Activated B cell treated with CpG ODN at 0.5 μM for 24 hours (primary cell): ENCODE measurements at regions of chr4 and their contacts with region 1.

Region 1: GRCh38 chr4:13654158-13654797 is 26.8 kb upstream of the BOD1L1 start:
- DNase-seq: peak; percentile 71
- ATAC-seq: peak; percentile 93
- H3K4me3 Mint-ChIP-seq: peak overlapping the region; percentile 85
- H3K27ac Mint-ChIP-seq: no peak overlapping the region
- H3K4me1 Mint-ChIP-seq: peaks cover 13% of the 10 kb centered on the region
- H3K27me3 Mint-ChIP-seq: peaks cover 6% of the 10 kb centered on the region
- CTCF ChIP-seq: peak; percentile 43

Region 2: DNA sequence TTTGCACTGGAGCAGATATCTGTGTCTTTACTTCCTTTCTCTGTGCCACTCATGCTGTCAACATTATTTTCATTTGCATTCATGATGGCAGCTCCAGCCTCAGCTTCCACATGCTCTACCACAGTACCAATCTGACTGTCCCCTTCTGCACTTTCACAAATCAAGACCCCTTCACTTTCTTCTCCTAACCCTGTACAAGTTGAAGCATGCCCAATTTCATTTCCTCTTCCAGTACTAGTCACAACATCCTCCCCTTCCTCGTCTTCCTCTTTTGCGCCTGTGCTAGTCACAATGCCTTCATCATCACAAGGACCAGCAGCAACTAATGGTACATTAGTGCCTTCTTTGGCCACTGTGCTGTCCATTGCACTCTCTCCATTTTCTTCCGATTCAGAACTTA is 53.2 kb before region 1 on chr4:
- CTCF ChIA-PET with region 1: interaction called, 4 read pairs
- POLR2A ChIA-PET with region 1: no interaction called
- intact Hi-C with region 1: loop called (anchors 2 kb)
- DNase-seq: no peak
- ATAC-seq: peak; percentile 96
- H3K4me3 Mint-ChIP-seq: peak overlapping the region; percentile 48
- H3K27ac Mint-ChIP-seq: peak overlapping the region; percentile 76
- H3K4me1 Mint-ChIP-seq: peaks cover 34% of the 10 kb centered on the region
- H3K27me3 Mint-ChIP-seq: no peaks in the 10 kb centered on the region
- CTCF ChIP-seq: no peak

Region 3: GRCh38 chr4:13918110-13918509 is 263.8 kb after region 1 on chr4:
- CTCF ChIA-PET with region 1: no interaction called
- POLR2A ChIA-PET with region 1: no interaction called
- intact Hi-C with region 1: no loop called
- DNase-seq: no peak
- ATAC-seq: no peak
- H3K4me3 Mint-ChIP-seq: no peak overlapping the region
- H3K27ac Mint-ChIP-seq: no peak overlapping the region
- H3K4me1 Mint-ChIP-seq: no peaks in the 10 kb centered on the region
- H3K27me3 Mint-ChIP-seq: peaks cover 4% of the 10 kb centered on the region
- CTCF ChIP-seq: no peak

Region 4: GRCh38 chr4:14125375-14126129 is 471.3 kb after region 1 on chr4:
- CTCF ChIA-PET with region 1: no interaction called
- POLR2A ChIA-PET with region 1: no interaction called
- intact Hi-C with region 1: loop called (anchors 10 kb)
- DNase-seq: no peak
- ATAC-seq: peak; percentile 90
- H3K4me3 Mint-ChIP-seq: peak overlapping the region; percentile 59
- H3K27ac Mint-ChIP-seq: peak overlapping the region; percentile 84
- H3K4me1 Mint-ChIP-seq: peaks cover 27% of the 10 kb centered on the region
- H3K27me3 Mint-ChIP-seq: no peaks in the 10 kb centered on the region
- CTCF ChIP-seq: no peak

Region 5: DNA sequence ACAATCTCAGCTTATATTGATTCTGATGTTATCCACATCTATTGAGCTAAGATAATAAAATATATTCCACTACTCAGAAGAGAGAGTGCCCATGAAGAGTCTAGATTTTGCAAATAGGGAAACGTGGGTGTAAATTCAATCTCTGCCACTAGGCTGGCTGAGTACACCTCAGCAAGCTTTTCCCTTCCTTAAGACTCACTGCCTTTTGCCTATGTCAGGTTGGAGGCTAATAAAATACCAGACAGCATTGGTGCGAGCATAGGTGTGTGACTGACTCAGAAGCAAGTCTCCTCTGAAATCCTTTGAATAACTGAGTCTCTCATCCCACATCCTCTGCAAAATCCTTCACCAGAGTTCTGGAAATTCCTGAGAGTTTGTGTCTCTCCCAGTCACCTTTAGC is 942.6 kb after region 1 on chr4:
- CTCF ChIA-PET with region 1: no interaction called
- POLR2A ChIA-PET with region 1: no interaction called
- intact Hi-C with region 1: loop called (anchors 10 kb)
- DNase-seq: no peak
- ATAC-seq: no peak
- H3K4me3 Mint-ChIP-seq: no peak overlapping the region
- H3K27ac Mint-ChIP-seq: no peak overlapping the region
- H3K4me1 Mint-ChIP-seq: peaks cover 6% of the 10 kb centered on the region
- H3K27me3 Mint-ChIP-seq: no peaks in the 10 kb centered on the region
- CTCF ChIP-seq: no peak

Region 6: DNA sequence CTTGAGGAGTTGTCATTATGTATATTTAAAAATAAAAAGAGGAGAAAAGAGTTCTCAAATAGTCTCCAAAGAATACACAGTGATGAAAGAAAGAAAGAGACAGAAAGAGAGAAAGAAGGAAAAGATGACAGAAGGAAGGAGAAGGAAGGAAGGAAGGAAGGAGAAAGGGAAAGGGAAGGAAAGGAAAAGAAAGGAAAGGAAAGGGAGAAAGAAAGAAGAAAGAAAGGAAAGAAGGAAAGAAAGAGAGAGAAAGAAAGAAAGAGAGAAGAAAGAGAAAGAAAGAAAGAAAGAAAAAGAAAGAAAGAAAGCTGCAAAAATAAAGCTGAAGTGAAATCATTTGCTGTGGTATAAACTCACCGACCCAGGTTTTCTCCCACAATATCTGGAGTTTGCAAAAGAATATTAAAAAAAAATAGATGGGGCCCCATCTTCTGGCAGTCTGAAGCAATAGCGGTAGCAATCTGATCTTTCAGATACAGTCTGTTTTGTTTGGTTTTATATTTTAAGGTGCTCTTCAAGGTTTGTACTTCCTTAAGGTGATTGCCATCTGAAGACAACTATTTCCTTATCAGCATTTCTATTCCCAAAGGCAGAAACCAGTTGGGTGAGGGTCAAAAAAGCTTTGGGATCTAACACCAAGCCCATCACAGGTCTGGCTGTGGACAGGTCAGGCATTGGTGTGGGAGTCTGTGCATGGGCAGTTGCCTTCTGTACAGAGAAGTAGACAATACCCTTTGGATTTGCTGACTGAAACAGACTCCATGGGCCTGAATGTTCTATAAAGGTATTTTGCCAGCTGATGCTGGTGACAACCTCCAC is 1508.4 kb after region 1 on chr4:
- CTCF ChIA-PET with region 1: interaction called, 7 read pairs
- POLR2A ChIA-PET with region 1: no interaction called
- intact Hi-C with region 1: loop called (anchors 1 kb)
- DNase-seq: no peak
- ATAC-seq: no peak
- H3K4me3 Mint-ChIP-seq: no peak overlapping the region
- H3K27ac Mint-ChIP-seq: no peak overlapping the region
- H3K4me1 Mint-ChIP-seq: no peaks in the 10 kb centered on the region
- H3K27me3 Mint-ChIP-seq: peaks cover 8% of the 10 kb centered on the region
- CTCF ChIP-seq: no peak

Region 7: GRCh38 chr4:15396157-15396800 is 1742.0 kb after region 1 on chr4:
- CTCF ChIA-PET with region 1: no interaction called
- POLR2A ChIA-PET with region 1: no interaction called
- intact Hi-C with region 1: loop called (anchors 1 kb)
- DNase-seq: no peak
- ATAC-seq: peak; percentile 88
- H3K4me3 Mint-ChIP-seq: no peak overlapping the region
- H3K27ac Mint-ChIP-seq: no peak overlapping the region
- H3K4me1 Mint-ChIP-seq: peaks cover 32% of the 10 kb centered on the region
- H3K27me3 Mint-ChIP-seq: peaks cover 2% of the 10 kb centered on the region
- CTCF ChIP-seq: peak; percentile 33